ENCODE measurements at regions of chr12 and their contacts with region 1.

Region 1: DNA sequence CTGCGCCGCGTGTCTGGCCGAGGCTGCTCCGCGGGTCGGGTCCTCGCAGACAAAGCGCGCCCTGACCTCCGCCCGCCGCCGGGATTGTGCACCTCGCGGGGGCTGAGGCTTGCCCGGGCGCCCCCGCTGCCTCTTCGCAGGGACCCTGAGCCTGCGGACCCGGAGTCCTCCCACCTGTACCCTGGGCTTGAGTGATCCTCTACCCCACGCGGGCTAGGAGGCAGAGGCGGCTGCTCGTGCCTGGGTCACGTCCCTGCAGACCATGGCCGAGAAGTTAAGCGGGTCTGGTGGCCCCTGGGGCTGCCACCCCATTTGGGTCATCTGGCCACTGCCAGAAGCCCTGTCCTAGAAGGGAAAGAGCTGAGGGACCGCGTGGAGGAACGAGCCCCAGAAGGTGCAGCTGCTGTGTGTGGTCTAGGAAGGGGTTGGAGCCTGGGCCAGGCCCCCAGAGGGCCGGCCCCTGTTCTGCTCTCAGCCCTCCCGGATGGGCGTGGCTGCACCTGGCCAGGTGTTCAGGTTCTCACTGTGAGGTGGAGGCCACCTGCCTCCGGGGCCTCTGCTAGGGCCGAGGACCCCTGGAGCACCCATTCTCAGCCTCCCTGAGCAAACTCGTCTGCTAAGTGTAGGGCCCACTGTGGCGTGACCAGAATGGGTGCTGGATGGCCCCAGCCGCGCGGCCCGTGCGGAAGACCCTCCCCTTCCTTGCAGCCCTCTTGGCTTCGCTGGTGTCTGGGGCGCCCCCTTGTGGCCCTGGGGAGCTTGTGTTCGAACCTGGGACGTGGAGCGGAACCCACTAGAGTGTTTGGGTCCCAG is 49.6 kb downstream of the LRCOL1 start:
- DNase-seq: peak; percentile 90
- ATAC-seq: peak; percentile 74
- H3K4me3 Mint-ChIP-seq: peak overlapping the region; percentile 73
- H3K27ac Mint-ChIP-seq: no peak overlapping the region
- H3K4me1 Mint-ChIP-seq: peaks cover 13% of the 10 kb centered on the region
- H3K27me3 Mint-ChIP-seq: peaks cover 7% of the 10 kb centered on the region

Region 2: GRCh38 chr12:132083941-132084620 is 476.7 kb before region 1 on chr12:
- CTCF ChIA-PET with region 1: no interaction called
- POLR2A ChIA-PET with region 1: no interaction called
- intact Hi-C with region 1: loop called in 1 of 2 experiments (anchors 1 kb)
- DNase-seq: peak; percentile 94
- ATAC-seq: peak; percentile 95
- H3K4me3 Mint-ChIP-seq: peak overlapping the region; percentile 86
- H3K27ac Mint-ChIP-seq: peak overlapping the region; percentile 91
- H3K4me1 Mint-ChIP-seq: peaks cover 23% of the 10 kb centered on the region
- H3K27me3 Mint-ChIP-seq: no peaks in the 10 kb centered on the region

Region 3: DNA sequence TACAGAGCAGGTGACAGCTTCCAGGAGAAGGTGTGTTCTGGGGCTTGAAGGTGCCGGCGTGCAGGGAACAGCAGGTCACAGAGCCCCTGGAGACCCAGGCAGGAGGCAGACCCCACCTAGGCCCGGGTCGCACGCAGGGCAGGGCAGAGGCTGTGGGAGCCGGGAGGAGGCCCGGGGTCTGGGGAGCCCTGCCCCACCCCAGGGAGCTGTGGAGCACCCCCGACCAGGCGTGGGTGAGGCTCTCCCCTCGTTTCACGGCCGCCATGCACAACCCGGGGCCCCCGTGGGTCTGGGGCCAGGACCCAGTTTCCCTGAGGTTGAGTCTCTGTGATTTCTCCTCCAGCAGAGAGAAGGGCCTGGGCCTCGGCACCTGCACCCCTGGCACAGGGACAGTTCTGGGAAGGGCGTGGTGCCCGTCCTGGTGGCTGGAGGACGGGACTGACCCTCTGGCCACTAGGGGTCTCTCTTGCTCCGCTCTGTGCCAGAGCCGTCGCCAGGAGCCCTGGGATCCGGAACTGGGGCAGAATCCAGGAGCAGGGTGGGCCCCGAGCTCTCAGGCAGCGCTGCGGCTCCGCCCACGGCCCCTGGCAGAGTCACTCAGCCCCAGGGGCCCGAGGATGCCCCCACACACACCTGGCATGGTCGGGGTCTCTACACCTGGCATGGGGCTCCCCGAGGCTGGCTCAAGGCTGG is 146.0 kb before region 1 on chr12:
- CTCF ChIA-PET with region 1: interaction called, 8 read pairs
- POLR2A ChIA-PET with region 1: no interaction called
- intact Hi-C with region 1: loop called (anchors 1 to 2 kb)
- DNase-seq: peak; percentile 87
- ATAC-seq: peak; percentile 96
- H3K4me3 Mint-ChIP-seq: no peak overlapping the region
- H3K27ac Mint-ChIP-seq: no peak overlapping the region
- H3K4me1 Mint-ChIP-seq: no peaks in the 10 kb centered on the region
- H3K27me3 Mint-ChIP-seq: no peaks in the 10 kb centered on the region

Region 4: GRCh38 chr12:132460571-132460970 is 100.2 kb before region 1 on chr12:
- CTCF ChIA-PET with region 1: interaction called, 4 read pairs
- POLR2A ChIA-PET with region 1: no interaction called
- intact Hi-C with region 1: loop called in 1 of 2 experiments (anchors 1 kb)
- DNase-seq: peak; percentile 59
- ATAC-seq: peak; percentile 57
- H3K4me3 Mint-ChIP-seq: no peak overlapping the region
- H3K27ac Mint-ChIP-seq: no peak overlapping the region
- H3K4me1 Mint-ChIP-seq: peaks cover under 1% of the 10 kb centered on the region
- H3K27me3 Mint-ChIP-seq: no peaks in the 10 kb centered on the region

Region 5: DNA sequence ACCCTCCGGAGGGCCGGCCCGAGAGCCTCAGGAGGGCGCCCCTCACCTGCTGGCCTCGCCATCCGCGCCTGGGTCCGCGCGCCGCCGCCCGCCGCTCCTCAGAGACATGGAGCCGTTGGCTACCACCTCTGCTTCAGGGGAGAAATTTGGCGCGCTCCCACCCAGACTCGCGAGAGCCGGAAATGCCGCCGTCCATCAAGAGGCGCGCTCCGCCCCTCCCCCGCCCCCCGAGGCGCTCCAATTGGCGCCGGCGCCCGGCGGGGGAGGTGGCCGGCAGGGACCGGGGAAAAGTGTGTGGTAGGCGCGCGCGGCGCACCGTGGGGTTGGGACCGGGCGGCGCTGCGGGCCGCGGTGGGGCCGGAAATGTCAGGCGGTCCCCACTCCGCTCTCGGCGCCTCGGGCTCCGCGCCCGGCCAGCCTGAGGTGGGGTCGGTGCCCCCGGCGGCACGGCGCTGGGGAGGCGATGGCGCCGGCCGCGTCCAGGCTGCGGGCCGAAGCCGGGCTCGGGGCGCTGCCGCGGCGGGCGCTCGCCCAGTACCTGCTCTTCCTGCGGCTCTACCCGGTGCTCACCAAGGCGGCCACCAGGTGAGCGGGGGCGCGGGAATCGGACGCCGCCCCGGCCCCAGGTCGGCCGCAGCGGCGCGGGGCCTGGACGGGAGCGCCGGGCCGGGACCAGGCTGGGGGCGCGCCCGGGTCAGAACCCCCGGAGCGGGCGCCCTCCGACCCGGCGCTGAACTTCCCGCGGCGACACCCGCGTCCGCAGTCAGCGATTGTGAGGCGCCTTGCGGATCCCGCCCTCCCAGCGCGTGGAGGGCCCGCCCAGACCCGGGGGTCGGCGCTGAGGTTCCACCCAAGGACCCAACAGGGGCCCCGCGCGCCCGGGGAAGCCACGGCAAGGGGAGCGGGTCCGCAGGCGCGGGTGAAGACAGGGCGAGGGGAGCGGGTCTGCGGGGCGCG is 126.7 kb after region 1 on chr12 and contains the starts of genes POLE and PXMP2:
- CTCF ChIA-PET with region 1: no interaction called
- POLR2A ChIA-PET with region 1: no interaction called
- intact Hi-C with region 1: loop called in 1 of 2 experiments (anchors 1 kb)
- DNase-seq: peak; percentile 98
- ATAC-seq: peak; percentile 94
- H3K4me3 Mint-ChIP-seq: peak within 1 kb of the TSS; percentile 72
- H3K27ac Mint-ChIP-seq: peak within 1 kb of the TSS; percentile 55
- H3K4me1 Mint-ChIP-seq: peaks cover 19% of the 10 kb centered on the region
- H3K27me3 Mint-ChIP-seq: no peaks in the 10 kb centered on the region
- total RNA-seq, gene POLE: 121 to 124 TPM
- total RNA-seq, gene PXMP2: 12.2 to 14.3 TPM

Measured in activated CD4-positive, alpha-beta T cell treated with anti-CD3 and anti-CD28 coated beads for 36 hours (primary cell).